ENCODE measurements at regions of chr18 and their contacts with region 1.

Region 1: GRCh38 chr18:45212181-45213039 is 402.9 kb upstream of the SLC14A2 start:
- DNase-seq: peak; percentile 59
- H3K4me3 Mint-ChIP-seq: no peak overlapping the region
- H3K27ac Mint-ChIP-seq: no peak overlapping the region
- H3K4me1 Mint-ChIP-seq: no peaks in the 10 kb centered on the region
- H3K27me3 Mint-ChIP-seq: peaks cover 10% of the 10 kb centered on the region

Region 2: GRCh38 chr18:43620936-43621335 is 1591.5 kb before region 1 on chr18:
- intact Hi-C with region 1: loop called (anchors 5 kb)
- DNase-seq: no peak
- H3K4me3 Mint-ChIP-seq: no peak overlapping the region
- H3K27ac Mint-ChIP-seq: no peak overlapping the region
- H3K4me1 Mint-ChIP-seq: no peaks in the 10 kb centered on the region
- H3K27me3 Mint-ChIP-seq: no peaks in the 10 kb centered on the region

Region 3: DNA sequence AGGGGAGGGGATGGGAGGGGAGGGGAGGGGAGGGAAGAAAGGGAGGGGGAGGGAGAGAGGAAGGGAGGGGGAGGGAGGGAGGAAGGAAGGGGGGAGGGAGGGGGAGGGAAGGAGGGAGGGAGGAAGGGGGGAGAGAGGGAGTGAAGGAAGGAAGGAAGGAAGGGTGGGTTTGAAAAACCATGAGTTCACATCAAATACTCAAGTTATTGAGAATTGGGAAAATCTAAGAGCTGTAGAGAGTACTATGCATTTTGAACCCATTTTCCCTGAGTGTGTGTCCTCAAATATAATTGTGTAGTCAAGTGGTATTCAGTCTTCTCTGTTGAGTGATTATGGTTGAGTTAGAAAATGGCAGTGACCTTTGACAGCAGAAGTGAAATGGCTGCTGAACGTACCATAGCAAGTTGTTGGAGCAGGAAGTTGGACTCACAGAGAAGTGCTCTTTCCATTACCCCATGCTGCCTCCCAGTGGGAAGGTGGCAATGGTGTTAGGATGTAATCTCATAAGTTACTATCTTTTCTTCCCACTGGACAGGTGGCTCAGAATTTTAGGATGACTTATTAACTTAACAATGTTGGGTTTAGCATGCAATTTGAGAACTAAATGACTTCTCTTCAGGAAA is 317.1 kb before region 1 on chr18:
- intact Hi-C with region 1: loop called (anchors 5 kb)
- DNase-seq: peak; percentile 10
- H3K4me3 Mint-ChIP-seq: no peak overlapping the region
- H3K27ac Mint-ChIP-seq: peak overlapping the region; percentile 20
- H3K4me1 Mint-ChIP-seq: peaks cover 49% of the 10 kb centered on the region
- H3K27me3 Mint-ChIP-seq: no peaks in the 10 kb centered on the region

Region 4: DNA sequence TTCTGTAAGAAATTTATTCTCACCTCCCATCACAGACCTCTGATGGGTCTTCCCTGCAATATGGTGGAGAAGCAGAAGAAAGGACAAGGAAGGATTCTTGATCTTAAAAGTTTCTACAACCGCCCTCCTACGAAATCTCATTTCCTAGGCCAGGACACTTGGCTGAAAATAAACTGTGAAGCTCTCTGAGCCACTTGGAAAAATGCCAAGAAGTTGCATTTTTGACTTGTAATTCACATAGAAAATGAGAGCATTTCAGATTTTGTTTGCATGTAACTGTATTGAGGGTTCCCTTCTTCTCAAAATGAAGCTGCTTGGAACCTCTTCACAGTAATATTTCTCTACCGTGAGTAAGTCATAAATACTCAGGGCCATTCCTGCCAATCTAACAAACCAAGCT is 55.5 kb before region 1 on chr18:
- intact Hi-C with region 1: no loop called
- DNase-seq: no peak
- H3K4me3 Mint-ChIP-seq: no peak overlapping the region
- H3K27ac Mint-ChIP-seq: no peak overlapping the region
- H3K4me1 Mint-ChIP-seq: no peaks in the 10 kb centered on the region
- H3K27me3 Mint-ChIP-seq: peaks cover 6% of the 10 kb centered on the region

Region 5: DNA sequence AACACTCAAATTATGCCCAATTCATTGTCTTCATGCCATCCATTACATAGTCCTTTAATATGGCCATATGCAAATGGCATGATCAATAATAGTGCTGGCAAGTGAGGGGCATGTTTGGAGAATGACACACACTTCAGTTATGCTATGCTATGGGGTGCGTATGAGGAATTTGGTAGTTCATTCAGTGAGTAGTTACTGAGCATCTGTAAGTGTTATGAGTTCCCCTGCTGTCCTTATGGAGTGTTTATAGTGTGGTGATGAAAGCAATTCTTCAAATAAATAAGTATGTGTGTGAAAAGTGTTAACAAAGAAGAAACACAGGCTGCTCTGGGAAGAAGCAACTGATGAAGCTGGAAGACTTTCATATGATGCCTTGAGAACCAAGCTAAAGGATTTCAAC is 19.2 kb after region 1 on chr18:
- intact Hi-C with region 1: no loop called
- DNase-seq: no peak
- H3K4me3 Mint-ChIP-seq: no peak overlapping the region
- H3K27ac Mint-ChIP-seq: no peak overlapping the region
- H3K4me1 Mint-ChIP-seq: no peaks in the 10 kb centered on the region
- H3K27me3 Mint-ChIP-seq: no peaks in the 10 kb centered on the region